CD4-positive, alpha-beta memory T cell (primary cell): ENCODE measurements at regions of chr2 and their contacts with region 1.

Region 1: GRCh38 chr2:231056453-231057424 is at the start of gene PSMD1:
- DNase-seq: peak; percentile 95 to 98 (median 96)
- H3K4me3 ChIP-seq: peak within 1 kb of the TSS; percentile 70 to 87
- H3K4me3 Mint-ChIP-seq: peak within 1 kb of the TSS; percentile 98 to 100 (median 99)
- H3K27ac ChIP-seq: peak within 1 kb of the TSS; percentile 85
- H3K27ac Mint-ChIP-seq: peak within 1 kb of the TSS; percentile 99 to 100 (median 100)
- H3K4me1 ChIP-seq: peaks cover 35% of the 10 kb centered on the region
- H3K4me1 Mint-ChIP-seq: peaks cover 31 to 66% (median 49%) of the 10 kb centered on the region in 4 donors
- H3K27me3 ChIP-seq: no peaks in the 10 kb centered on the region
- H3K27me3 Mint-ChIP-seq: peaks cover 0 to 5% of the 10 kb centered on the region in 2 donors
- total RNA-seq, gene PSMD1: 38.0 to 40.8 TPM

Region 2: GRCh38 chr2:230902180-230902899 is 154.4 kb before region 1 on chr2:
- CTCF ChIA-PET with region 1: interaction called, 8 read pairs
- POLR2A ChIA-PET with region 1: no interaction called
- intact Hi-C with region 1: loop called (anchors 10 kb)
- DNase-seq: peak in 4 of 5 donors; percentile 33 to 54 (median 38)
- H3K4me3 ChIP-seq: no peak overlapping the region
- H3K4me3 Mint-ChIP-seq: no peak overlapping the region
- H3K27ac ChIP-seq: no peak overlapping the region
- H3K27ac Mint-ChIP-seq: no peak overlapping the region
- H3K4me1 ChIP-seq: peaks cover 17% of the 10 kb centered on the region
- H3K4me1 Mint-ChIP-seq: peaks cover 7 to 23% (median 18%) of the 10 kb centered on the region in 4 donors
- H3K27me3 ChIP-seq: no peaks in the 10 kb centered on the region
- H3K27me3 Mint-ChIP-seq: peaks cover 5 to 7% of the 10 kb centered on the region in 2 donors

Region 3: GRCh38 chr2:231041061-231041689 is 15.6 kb before region 1 on chr2:
- CTCF ChIA-PET with region 1: interaction called, 15 read pairs
- POLR2A ChIA-PET with region 1: no interaction called
- intact Hi-C with region 1: no loop called
- DNase-seq: no peak
- H3K4me3 ChIP-seq: no peak overlapping the region
- H3K4me3 Mint-ChIP-seq: no peak overlapping the region
- H3K27ac ChIP-seq: no peak overlapping the region
- H3K27ac Mint-ChIP-seq: no peak overlapping the region
- H3K4me1 ChIP-seq: no peaks in the 10 kb centered on the region
- H3K4me1 Mint-ChIP-seq: peaks cover 0 to 9% (median 2%) of the 10 kb centered on the region in 4 donors
- H3K27me3 ChIP-seq: peaks cover 19% of the 10 kb centered on the region
- H3K27me3 Mint-ChIP-seq: peaks cover 28 to 47% of the 10 kb centered on the region in 2 donors

Region 4: DNA sequence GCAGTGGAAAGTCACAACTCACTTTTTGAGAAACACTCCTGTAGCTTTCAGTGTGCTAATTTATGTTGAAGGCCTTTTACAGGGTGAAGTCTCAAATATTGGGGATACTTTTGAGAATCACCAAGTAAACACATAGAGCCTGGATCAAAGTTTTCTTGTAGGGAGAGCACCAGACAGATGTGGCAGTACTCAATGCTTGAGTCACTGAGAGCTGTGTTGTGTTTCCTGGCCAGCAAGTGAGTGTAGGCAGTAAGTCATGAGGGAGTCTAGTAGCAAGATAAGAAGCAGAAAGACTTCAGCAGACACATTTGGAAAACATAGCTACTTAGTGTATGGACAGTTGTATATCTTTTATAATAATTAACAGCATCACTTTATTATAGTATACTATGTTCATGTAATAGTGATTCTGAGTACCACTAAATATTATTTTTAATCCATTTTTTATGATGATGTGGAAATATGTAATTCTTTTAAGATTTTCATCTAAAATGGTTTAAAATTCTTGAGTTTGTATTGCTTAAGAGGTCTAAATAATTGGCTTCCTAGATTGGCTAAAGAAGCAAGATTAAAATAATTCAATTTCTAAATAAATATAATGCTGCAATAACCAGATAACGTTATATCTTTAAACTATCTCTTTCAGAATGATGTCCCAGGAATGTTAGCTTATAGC is 12.8 kb after region 1 on chr2:
- CTCF ChIA-PET with region 1: interaction called, 21 read pairs
- POLR2A ChIA-PET with region 1: no interaction called
- intact Hi-C with region 1: loop called (anchors 2 kb)
- DNase-seq: no peak
- H3K4me3 ChIP-seq: no peak overlapping the region
- H3K4me3 Mint-ChIP-seq: no peak overlapping the region
- H3K27ac ChIP-seq: no peak overlapping the region
- H3K27ac Mint-ChIP-seq: peak overlapping the region in 1 of 7 donors; percentile 22
- H3K4me1 ChIP-seq: no peaks in the 10 kb centered on the region
- H3K4me1 Mint-ChIP-seq: peaks cover 3 to 12% (median 10%) of the 10 kb centered on the region in 4 donors
- H3K27me3 ChIP-seq: no peaks in the 10 kb centered on the region
- H3K27me3 Mint-ChIP-seq: no peaks in the 10 kb centered on the region